ENCODE measurements at regions of chr3 and their contacts with region 1.

Region 1: DNA sequence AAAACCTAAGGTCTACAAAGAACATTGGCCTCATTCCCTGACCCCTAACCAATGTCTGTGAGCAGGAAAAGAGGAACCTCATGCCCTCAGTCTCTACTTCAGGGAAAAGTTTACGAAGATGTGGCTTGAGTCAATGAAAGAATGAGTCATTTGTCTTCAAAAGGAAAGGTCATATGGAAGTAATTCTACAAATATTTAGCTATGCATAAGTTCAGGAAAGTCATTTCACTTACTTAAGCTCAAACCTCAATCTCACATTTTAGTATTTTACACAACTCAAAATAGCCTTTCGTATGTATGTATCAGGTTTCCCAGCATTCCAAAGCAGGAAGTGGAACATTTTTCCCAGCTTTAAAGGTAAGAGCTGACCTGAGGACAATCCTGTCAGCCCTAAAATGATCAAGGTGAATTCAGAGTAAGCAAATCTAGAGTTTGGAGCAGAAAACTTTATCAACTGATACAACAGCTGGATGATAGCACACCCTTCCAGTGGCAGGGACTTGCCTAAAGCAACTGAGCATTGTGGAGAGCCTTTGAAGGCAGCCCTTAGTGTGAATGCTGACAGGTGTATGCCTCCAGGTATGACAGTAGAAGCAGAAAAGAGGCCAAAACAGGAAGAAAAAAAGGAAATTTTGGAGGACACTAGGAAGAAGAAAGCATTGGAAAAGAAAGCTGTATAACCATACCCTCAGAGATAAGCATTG is 53.9 kb upstream of the ACKR4 start:
- DNase-seq: no peak
- H3K4me3 ChIP-seq: no peak overlapping the region
- H3K4me1 ChIP-seq: peaks cover 9% of the 10 kb centered on the region
- H3K27me3 ChIP-seq: no peaks in the 10 kb centered on the region

Region 2: GRCh38 chr3:131981323-131981722 is 561.9 kb before region 1 on chr3:
- in situ Hi-C with region 1: no loop called
- DNase-seq: no peak
- H3K4me3 ChIP-seq: no peak overlapping the region
- H3K4me1 ChIP-seq: peaks cover 8% of the 10 kb centered on the region
- H3K27me3 ChIP-seq: no peaks in the 10 kb centered on the region

Region 3: DNA sequence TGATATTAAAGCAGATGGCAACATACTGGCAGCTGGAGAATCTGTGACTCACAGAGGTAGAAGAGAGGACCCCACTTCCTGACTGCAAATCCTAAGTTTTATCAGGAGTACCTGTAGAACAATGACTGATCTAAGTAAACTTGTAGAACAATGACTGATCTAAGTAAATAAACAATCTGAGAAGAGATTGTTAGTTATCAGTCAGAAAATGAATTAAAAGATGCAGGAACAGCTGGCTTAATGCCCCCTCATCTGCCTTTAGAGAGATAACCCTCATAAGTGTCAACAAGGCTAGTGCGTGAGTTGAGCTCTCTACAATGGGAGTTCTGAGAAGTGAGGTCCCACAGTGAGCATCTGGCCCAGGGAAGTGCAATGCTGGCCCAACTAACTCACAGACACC is 101.9 kb after region 1 on chr3:
- in situ Hi-C with region 1: loop called (anchors 5 kb)
- DNase-seq: no peak
- H3K4me3 ChIP-seq: no peak overlapping the region
- H3K4me1 ChIP-seq: no peaks in the 10 kb centered on the region
- H3K27me3 ChIP-seq: no peaks in the 10 kb centered on the region

Region 4: DNA sequence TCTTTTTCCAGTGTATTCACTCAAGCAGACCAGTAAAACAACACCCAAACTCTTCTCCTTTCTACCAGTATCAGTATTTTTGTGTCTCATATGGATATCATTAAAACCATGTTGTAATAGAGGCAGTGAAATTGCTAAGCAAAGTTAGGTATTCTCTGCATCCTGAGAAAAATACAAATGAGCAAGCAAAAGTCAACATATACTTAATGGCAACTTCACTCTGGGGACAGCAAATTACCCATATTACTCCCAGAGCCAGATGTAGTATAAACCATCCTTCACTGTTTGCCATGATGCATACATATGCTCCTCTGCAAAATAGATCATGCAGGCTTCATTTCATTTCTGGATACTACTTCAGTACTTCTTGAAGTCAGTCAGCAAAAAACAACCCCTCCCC is 139.0 kb after region 1 on chr3:
- in situ Hi-C with region 1: no loop called
- DNase-seq: no peak
- H3K4me3 ChIP-seq: no peak overlapping the region
- H3K4me1 ChIP-seq: no peaks in the 10 kb centered on the region
- H3K27me3 ChIP-seq: no peaks in the 10 kb centered on the region

Measured in HAP-1 (cell line).